ENCODE measurements at regions of chr4 and their contacts with region 1.

Region 1: GRCh38 chr4:48127682-48128394 is 6.2 kb downstream of the TXK start:
- DNase-seq: peak; percentile 13 to 74 (median 57)
- H3K4me3 ChIP-seq: peak overlapping the region; percentile 37
- H3K4me3 Mint-ChIP-seq: peak overlapping the region; percentile 35 to 92 (median 82)
- H3K27ac ChIP-seq: peak overlapping the region; percentile 10
- H3K27ac Mint-ChIP-seq: peak overlapping the region; percentile 90 to 99 (median 93)
- H3K4me1 ChIP-seq: peaks cover 89% of the 10 kb centered on the region
- H3K4me1 Mint-ChIP-seq: peaks cover 81 to 96% (median 92%) of the 10 kb centered on the region in 3 donors
- H3K27me3 ChIP-seq: no peaks in the 10 kb centered on the region
- H3K27me3 Mint-ChIP-seq: no peaks in the 10 kb centered on the region

Region 2: DNA sequence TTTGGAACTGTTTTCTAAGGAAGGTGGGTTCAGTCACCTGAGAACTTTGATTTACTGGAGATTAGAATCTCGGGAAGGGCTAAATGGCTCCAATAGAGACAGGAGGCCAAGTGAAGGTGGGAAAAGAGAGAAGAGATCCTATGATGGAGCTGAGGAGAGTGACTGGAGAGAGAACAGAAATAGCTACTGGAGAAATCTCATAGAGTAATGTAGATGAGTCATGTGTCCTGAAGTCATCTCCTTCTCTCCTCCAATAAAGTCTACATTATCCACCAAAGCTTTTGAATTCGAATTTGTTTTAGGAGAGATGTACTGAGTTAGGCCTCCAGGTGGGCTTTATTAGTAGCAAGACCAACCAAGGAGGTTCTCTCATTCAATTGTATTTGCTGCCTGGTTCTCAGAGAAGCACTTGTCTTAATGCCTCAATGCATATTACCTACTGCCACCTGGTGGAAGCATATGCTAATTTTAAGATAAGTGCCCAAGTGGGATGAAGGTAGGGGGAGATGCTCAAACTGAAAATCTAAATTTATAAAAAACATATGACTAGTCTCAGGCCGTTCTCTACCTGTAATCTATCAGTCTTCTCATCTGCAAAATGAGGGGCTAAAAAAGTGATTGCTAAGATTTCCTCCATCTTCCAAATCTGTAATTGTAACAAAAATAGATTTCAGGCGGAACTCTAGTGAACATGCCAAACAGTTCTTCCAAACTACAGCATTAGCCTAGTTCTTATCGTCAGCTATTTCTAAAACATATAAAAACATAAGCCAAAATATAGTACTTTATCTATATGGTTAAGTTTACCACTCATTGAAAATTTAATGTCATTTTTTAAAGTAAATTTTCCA is 18.2 kb before region 1 on chr4:
- CTCF ChIA-PET with region 1: interaction called, 27 read pairs
- POLR2A ChIA-PET with region 1: no interaction called
- DNase-seq: peak in 2 of 5 donors; percentile 29 to 49
- H3K4me3 ChIP-seq: no peak overlapping the region
- H3K4me3 Mint-ChIP-seq: peak overlapping the region in 1 of 7 donors; percentile 19
- H3K27ac ChIP-seq: no peak overlapping the region
- H3K27ac Mint-ChIP-seq: peak overlapping the region in 5 of 8 donors; percentile 13 to 92 (median 70)
- H3K4me1 ChIP-seq: peaks cover 17% of the 10 kb centered on the region
- H3K4me1 Mint-ChIP-seq: peaks cover 45 to 49% (median 46%) of the 10 kb centered on the region in 3 donors
- H3K27me3 ChIP-seq: no peaks in the 10 kb centered on the region
- H3K27me3 Mint-ChIP-seq: no peaks in the 10 kb centered on the region

Region 3: DNA sequence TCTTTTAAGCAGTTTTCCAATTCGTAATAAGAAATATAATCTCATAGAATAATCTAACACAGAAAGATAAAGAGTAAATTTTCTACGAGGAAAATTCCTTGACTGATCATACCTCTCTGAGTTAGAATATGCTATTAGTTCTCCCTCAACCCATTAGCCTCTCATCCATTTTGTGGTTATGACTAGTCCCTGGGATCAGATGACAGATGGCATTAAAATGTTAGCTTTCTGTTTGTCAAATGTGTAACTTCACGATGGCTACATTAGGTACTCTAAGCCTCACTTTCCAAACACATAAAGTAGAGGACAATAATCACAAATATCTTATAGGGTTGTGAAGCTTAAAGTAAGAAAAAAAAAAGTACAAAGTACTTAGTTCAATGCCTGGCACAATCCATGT is 474.4 kb after region 1 on chr4:
- CTCF ChIA-PET with region 1: no interaction called
- POLR2A ChIA-PET with region 1: no interaction called
- DNase-seq: no peak
- H3K4me3 ChIP-seq: no peak overlapping the region
- H3K4me3 Mint-ChIP-seq: no peak overlapping the region
- H3K27ac ChIP-seq: no peak overlapping the region
- H3K27ac Mint-ChIP-seq: no peak overlapping the region
- H3K4me1 ChIP-seq: no peaks in the 10 kb centered on the region
- H3K4me1 Mint-ChIP-seq: peaks cover 0 to 4% (median 4%) of the 10 kb centered on the region in 3 donors
- H3K27me3 ChIP-seq: no peaks in the 10 kb centered on the region
- H3K27me3 Mint-ChIP-seq: no peaks in the 10 kb centered on the region

Measured in CD8-positive, alpha-beta memory T cell (primary cell).